ENCODE measurements at regions of chr11 and their contacts with region 1.

Region 1: GRCh38 chr11:102367364-102367763 is 20.4 kb downstream of the BIRC2 start:
- DNase-seq: peak; percentile 66
- H3K4me3 ChIP-seq: no peak overlapping the region
- H3K27ac ChIP-seq: no peak overlapping the region
- H3K4me1 ChIP-seq: peaks cover 9% of the 10 kb centered on the region
- H3K27me3 ChIP-seq: no peaks in the 10 kb centered on the region
- CTCF ChIP-seq: no peak
- POLR2A ChIP-seq: no peak

Region 2: GRCh38 chr11:101686558-101687242 is 680.7 kb before region 1 on chr11:
- CTCF ChIA-PET with region 1: no interaction called
- POLR2A ChIA-PET with region 1: no interaction called
- dilution Hi-C with region 1: no loop called
- intact Hi-C with region 1: no loop called
- DNase-seq: no peak
- H3K4me3 ChIP-seq: no peak overlapping the region
- H3K27ac ChIP-seq: no peak overlapping the region
- H3K4me1 ChIP-seq: no peaks in the 10 kb centered on the region
- H3K27me3 ChIP-seq: no peaks in the 10 kb centered on the region
- CTCF ChIP-seq: no peak
- POLR2A ChIP-seq: no peak

Region 3: DNA sequence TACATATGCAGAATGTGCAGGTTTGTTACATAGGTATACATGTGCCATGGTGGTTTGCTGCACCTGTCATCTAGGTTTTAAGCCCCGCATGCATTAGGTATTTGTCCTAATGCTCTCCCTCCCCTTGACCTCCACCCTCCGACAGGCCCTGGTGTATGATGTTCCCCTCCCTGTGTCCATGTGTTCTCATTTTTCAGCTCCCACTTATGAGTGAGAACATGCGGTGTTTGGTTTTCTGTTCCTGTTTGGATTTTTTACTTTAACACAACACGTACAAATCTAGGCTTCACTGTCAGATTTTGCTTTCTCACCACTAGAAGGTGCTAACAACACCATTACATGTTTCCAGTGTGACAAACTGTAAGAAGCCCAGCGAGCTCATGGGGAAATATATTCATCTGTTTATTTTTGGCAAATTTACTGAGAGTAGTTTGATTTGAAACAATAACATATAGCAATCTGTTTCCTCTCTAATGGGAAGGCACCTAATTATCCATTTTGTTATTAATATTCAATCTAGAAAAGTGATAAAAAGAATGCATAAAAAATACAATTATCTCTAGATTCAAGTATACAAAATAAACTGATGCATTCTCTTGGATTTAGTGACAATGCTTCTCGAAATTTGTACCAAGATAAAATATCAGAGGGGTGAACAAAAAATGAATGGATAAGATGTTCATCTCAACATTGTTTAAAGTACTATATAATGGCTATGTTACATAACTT is 73.3 kb before region 1 on chr11:
- CTCF ChIA-PET with region 1: interaction called, 15 read pairs
- POLR2A ChIA-PET with region 1: no interaction called
- dilution Hi-C with region 1: no loop called
- intact Hi-C with region 1: no loop called
- DNase-seq: peak; percentile 50
- H3K4me3 ChIP-seq: no peak overlapping the region
- H3K27ac ChIP-seq: no peak overlapping the region
- H3K4me1 ChIP-seq: no peaks in the 10 kb centered on the region
- H3K27me3 ChIP-seq: no peaks in the 10 kb centered on the region
- CTCF ChIP-seq: peak; percentile 41 to 61
- POLR2A ChIP-seq: no peak

Region 4: GRCh38 chr11:102390667-102391465 is 23.5 kb after region 1 on chr11:
- CTCF ChIA-PET with region 1: interaction called, 14 read pairs
- POLR2A ChIA-PET with region 1: no interaction called
- dilution Hi-C with region 1: no loop called
- intact Hi-C with region 1: no loop called
- DNase-seq: peak; percentile 63
- H3K4me3 ChIP-seq: no peak overlapping the region
- H3K27ac ChIP-seq: no peak overlapping the region
- H3K4me1 ChIP-seq: peaks cover under 1% of the 10 kb centered on the region
- H3K27me3 ChIP-seq: no peaks in the 10 kb centered on the region
- CTCF ChIP-seq: peak; percentile 83 to 88
- POLR2A ChIP-seq: no peak